HEK293 (cell line): ENCODE measurements at regions of chr1 and their contacts with region 1.

Region 1: DNA sequence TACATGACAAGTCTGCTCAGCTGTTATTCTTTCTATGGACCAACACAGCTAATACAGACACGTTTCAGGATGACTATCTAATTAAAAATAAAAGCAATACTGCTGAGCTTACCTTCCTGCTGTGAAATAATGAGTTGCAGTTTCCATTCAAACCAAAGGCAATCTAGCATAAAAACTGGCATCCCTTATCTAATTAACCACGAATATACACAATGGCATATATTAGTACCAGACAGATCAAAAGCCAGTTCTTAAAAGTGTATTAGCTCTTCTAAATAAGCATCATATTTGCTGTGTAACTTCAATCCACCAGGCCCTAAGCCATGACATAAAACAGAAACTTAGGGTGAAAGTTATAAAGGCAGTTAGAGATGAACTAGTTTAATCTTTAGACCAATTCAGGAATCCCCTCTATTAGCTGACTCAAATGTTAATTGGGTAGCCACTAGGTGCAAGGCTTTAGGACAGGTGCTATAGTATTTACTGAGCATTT is 20.6 kb downstream of the TESK2 start:
- H3K4me3 ChIP-seq: no peak overlapping the region
- H3K27ac ChIP-seq: no peak overlapping the region
- H3K4me1 ChIP-seq: no peaks in the 10 kb centered on the region
- CTCF ChIP-seq: no peak

Region 2: GRCh38 chr1:45490626-45491486 is 20.5 kb after region 1 on chr1 and contains the start of gene TESK2:
- CTCF ChIA-PET with region 1: interaction called, 12 read pairs
- POLR2A ChIA-PET with region 1: interaction called, 4 read pairs
- H3K4me3 ChIP-seq: peak within 1 kb of the TSS; percentile 92
- H3K27ac ChIP-seq: peak within 1 kb of the TSS; percentile 66; the same call in 1 of the 2 replicates
- H3K4me1 ChIP-seq: no peaks in the 10 kb centered on the region
- CTCF ChIP-seq: peak; percentile 25; the same call in 1 of the 2 replicates